Prostate gland (tissue), 2 donors: ENCODE measurements at regions of chr3 and their contacts with region 1.

Region 1: DNA sequence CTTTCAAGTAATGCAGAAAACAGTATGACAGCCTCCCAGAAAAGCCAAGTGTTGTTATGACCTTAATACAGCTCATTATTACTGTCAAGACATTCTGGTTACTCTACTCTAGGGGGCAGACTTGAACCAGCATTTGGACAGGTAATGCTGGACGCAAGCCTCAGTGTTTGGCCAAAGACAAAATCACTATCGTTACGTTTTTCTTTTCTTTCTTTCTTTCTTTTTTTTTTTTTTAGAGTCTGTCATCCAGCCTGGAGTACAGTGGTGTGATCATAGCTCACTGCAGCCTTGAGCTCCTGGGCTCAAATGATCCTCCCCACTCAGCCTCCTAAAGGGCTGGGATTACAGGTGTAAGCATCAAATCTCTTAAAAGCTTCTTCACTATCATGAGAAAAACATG is 29.4 kb upstream of the TMEM45A start:
- DNase-seq: peak; percentile 36
- H3K4me3 ChIP-seq: no peak overlapping the region
- H3K27ac ChIP-seq: no peak overlapping the region
- H3K4me1 ChIP-seq: no peaks in the 10 kb centered on the region
- H3K27me3 ChIP-seq: no peaks in the 10 kb centered on the region
- CTCF ChIP-seq: peak; percentile 32 to 76 (median 67)
- POLR2A ChIP-seq: no peak

Region 2: DNA sequence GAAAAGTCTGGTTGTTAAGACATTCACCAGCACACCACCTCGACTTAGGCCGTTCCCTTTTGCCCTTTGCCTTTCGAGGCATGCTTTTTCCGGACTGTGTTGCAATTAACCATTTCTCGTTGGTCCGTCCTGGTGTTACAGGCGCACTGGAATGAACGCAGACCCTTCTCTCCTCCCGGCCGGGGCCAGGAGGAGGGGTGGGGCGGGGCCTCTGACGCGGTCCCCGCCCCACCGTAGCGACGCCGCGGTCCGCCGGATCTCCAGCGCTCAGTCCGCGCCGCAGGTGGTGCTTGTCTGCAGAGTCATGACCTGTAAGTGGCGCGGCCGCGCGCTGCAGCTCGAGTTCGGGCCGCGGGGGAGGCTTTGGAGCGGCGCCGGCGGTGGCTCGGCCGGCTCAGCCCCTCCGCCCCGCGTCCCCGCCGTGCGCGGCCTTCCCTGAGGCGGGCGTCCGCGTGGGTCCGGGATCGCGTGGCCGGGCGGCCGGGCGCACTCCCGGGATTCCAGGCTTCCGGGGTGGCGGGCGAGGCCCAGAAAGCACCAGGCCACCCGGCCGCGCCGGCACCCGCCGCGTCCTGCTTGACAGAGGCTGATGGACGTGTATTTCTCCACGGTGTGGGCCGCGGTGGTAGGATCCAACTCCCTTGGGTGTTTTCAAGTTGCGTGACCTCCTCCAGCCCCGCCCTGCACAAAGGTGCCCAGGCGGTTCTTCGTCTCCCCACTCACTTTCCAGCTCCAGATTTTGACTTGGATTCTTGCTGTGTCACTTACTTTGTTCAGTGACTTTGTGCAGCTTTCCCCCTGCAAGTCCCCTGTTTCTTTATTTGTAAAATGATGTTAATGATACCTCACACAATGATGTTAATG is 128.3 kb before region 1 on chr3 and contains the start of gene NIT2:
- intact Hi-C with region 1: no loop called
- DNase-seq: peak; percentile 77
- H3K4me3 ChIP-seq: peak within 1 kb of the TSS; percentile 61 to 77
- H3K27ac ChIP-seq: peak within 1 kb of the TSS; percentile 79 to 82
- H3K4me1 ChIP-seq: no peaks in the 10 kb centered on the region
- H3K27me3 ChIP-seq: no peaks in the 10 kb centered on the region
- CTCF ChIP-seq: peak in 1 of 4 experiments; percentile 24
- POLR2A ChIP-seq: peak; percentile 58
- total RNA-seq, gene NIT2: 21.4 to 32.4 TPM

Region 3: GRCh38 chr3:100427699-100428098 is 35.3 kb before region 1 on chr3:
- intact Hi-C with region 1: no loop called
- DNase-seq: no peak
- H3K4me3 ChIP-seq: no peak overlapping the region
- H3K27ac ChIP-seq: no peak overlapping the region
- H3K4me1 ChIP-seq: no peaks in the 10 kb centered on the region
- H3K27me3 ChIP-seq: no peaks in the 10 kb centered on the region
- CTCF ChIP-seq: no peak
- POLR2A ChIP-seq: no peak

Region 4: GRCh38 chr3:100590114-100590839 is 127.3 kb after region 1 on chr3:
- intact Hi-C with region 1: loop called (anchors 1 kb)
- DNase-seq: peak; percentile 70
- H3K4me3 ChIP-seq: no peak overlapping the region
- H3K27ac ChIP-seq: no peak overlapping the region
- H3K4me1 ChIP-seq: no peaks in the 10 kb centered on the region
- H3K27me3 ChIP-seq: no peaks in the 10 kb centered on the region
- CTCF ChIP-seq: peak; percentile 82 to 92 (median 84)
- POLR2A ChIP-seq: no peak

Region 5: GRCh38 chr3:100796556-100796955 is 333.6 kb after region 1 on chr3:
- intact Hi-C with region 1: loop called (anchors 10 kb)
- DNase-seq: no peak
- H3K4me3 ChIP-seq: no peak overlapping the region
- H3K27ac ChIP-seq: no peak overlapping the region
- H3K4me1 ChIP-seq: no peaks in the 10 kb centered on the region
- H3K27me3 ChIP-seq: no peaks in the 10 kb centered on the region
- CTCF ChIP-seq: peak in 2 of 4 experiments; percentile 16 to 26
- POLR2A ChIP-seq: no peak